Activated T-helper 2 cell treated with anti-CD3 and anti-CD28 coated beads, Interferon-gamma antibody, Interleukin-2, Interleukin-4, amounts not matched to agents 10 μg/mL and 5 μg/mL and 100 μg/mL, durations not matched to agents 14 hours and 24 hours and 36 hours (primary cell): ENCODE measurements at regions of chr15 and their contacts with region 1.

Region 1: DNA sequence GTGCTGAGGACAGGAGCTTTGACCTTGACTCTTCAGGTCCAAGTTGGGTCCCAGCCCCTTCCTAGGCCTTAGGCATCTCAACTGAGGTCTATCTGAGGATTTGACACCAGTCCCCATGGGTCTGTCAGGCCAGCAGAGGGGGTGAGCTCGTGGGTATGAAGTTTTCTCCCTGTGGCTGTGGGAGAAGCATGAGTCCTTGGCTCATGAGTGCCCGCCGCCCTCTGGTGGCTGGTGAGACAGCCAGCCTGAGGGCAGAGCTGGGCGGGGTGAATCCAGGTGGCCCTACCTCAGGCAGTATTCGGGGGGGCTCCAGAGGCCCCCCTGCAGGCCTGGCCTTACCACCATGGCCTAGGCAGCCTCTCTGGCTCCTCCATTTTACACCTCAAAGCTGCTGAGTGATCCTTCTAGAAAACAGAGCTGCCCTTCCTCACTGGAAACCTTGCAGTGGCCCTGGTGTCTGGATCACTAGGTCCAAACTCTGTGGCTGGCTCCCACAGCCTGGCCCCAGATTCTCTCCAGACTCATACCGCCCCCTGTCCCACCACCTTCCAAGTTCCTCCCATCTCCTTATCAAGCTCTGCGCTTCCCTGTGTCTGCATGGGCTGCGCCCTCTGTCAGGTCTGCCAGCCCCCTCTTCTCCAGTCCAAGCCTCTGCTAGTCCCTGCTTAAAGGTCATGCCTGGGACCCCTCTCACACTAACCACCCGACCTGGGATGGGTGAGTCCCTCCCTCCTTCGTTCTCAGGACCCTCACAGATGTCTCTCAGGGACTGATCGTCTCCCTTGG is 16.1 kb downstream of the SH2D7 start:
- DNase-seq: peak; percentile 75
- H3K4me3 Mint-ChIP-seq: no peak overlapping the region
- H3K27ac Mint-ChIP-seq: no peak overlapping the region
- H3K4me1 Mint-ChIP-seq: peaks cover 48% of the 10 kb centered on the region
- H3K27me3 Mint-ChIP-seq: no peaks in the 10 kb centered on the region

Region 2: DNA sequence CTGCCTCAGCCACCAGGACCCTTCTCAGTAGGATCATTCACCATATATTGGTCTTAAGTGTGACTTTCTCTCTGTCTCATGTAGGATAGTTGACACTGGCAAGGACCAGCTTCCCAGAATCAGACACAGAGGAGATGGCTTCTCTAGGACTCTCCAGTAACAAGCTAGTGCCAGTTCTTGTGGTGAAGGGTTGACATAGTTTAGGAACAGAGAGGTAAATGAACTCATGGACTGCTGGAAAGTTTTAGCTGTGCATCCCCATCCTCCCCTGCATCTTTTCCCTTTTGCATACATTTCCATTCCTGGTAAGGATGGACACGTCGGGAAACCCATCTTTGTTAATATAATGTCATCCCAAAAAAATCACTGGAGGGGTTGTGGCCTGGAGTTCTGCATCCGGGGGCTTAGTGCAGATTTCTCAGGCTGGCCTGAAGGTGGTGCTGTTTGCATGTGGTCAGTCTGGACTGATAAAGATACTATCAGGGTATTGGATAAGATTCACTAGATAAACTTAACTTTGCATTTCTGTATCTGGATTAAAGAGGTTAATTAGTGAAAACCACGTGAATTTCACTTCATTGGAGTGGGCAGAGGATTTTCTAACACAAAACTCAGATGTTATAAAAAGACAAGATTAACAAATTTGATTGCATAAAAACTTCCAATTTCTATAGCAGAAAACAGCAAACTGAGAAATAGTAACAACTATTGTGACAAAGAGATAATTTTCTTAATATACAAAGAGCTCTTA is 141.8 kb before region 1 on chr15:
- intact Hi-C with region 1: loop called (anchors 1 kb)
- DNase-seq: no peak
- H3K4me3 Mint-ChIP-seq: no peak overlapping the region
- H3K27ac Mint-ChIP-seq: no peak overlapping the region
- H3K4me1 Mint-ChIP-seq: peaks cover 2% of the 10 kb centered on the region
- H3K27me3 Mint-ChIP-seq: peaks cover 36% of the 10 kb centered on the region

Region 3: DNA sequence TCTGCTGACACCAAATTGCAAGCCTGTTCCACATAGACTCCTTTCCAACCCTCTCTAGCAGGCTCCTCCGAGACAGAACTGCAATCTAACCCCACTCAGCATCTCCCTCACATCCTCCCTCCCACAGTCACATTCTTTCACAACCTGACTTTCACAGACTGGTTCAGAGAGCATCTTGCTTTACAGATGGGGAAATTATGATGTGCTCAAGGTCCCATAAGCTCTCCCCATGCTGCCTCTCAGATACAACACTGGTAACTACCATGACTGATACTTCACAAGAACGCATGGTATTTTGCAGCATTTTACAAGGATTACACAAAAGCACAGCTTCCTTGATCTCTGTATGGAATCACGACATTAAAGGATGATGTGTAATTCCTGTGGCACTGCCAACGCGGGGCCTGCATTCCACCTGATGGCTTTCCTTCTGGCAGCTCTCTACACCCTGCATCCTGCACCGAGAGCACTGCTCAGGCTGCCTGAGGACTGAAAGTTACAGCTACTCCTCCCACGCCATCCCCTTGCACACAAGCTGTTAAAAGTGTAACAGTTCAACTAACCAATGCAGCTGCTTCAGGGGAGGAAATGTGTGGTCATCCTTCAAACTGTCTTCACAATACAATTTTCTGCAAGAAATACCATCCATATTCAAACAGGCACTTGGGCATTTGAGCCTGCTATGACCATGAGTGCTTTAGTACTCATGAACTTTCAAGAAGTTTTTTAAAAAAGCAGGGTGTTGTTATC is 58.6 kb before region 1 on chr15:
- intact Hi-C with region 1: loop called (anchors 2 kb)
- DNase-seq: peak; percentile 57
- H3K4me3 Mint-ChIP-seq: peak overlapping the region; percentile 72
- H3K27ac Mint-ChIP-seq: peak overlapping the region; percentile 98
- H3K4me1 Mint-ChIP-seq: peaks cover 93% of the 10 kb centered on the region
- H3K27me3 Mint-ChIP-seq: no peaks in the 10 kb centered on the region

Region 4: GRCh38 chr15:78082106-78083078 is 26.1 kb before region 1 on chr15:
- intact Hi-C with region 1: loop called (anchors 2 kb)
- DNase-seq: no peak
- H3K4me3 Mint-ChIP-seq: no peak overlapping the region
- H3K27ac Mint-ChIP-seq: peak overlapping the region; percentile 74
- H3K4me1 Mint-ChIP-seq: peaks cover 34% of the 10 kb centered on the region
- H3K27me3 Mint-ChIP-seq: no peaks in the 10 kb centered on the region

Region 5: GRCh38 chr15:78195735-78196201 is 87.3 kb after region 1 on chr15:
- intact Hi-C with region 1: loop called (anchors 1 kb)
- DNase-seq: peak; percentile 23
- H3K4me3 Mint-ChIP-seq: no peak overlapping the region
- H3K27ac Mint-ChIP-seq: no peak overlapping the region
- H3K4me1 Mint-ChIP-seq: no peaks in the 10 kb centered on the region
- H3K27me3 Mint-ChIP-seq: peaks cover 8% of the 10 kb centered on the region

Region 6: DNA sequence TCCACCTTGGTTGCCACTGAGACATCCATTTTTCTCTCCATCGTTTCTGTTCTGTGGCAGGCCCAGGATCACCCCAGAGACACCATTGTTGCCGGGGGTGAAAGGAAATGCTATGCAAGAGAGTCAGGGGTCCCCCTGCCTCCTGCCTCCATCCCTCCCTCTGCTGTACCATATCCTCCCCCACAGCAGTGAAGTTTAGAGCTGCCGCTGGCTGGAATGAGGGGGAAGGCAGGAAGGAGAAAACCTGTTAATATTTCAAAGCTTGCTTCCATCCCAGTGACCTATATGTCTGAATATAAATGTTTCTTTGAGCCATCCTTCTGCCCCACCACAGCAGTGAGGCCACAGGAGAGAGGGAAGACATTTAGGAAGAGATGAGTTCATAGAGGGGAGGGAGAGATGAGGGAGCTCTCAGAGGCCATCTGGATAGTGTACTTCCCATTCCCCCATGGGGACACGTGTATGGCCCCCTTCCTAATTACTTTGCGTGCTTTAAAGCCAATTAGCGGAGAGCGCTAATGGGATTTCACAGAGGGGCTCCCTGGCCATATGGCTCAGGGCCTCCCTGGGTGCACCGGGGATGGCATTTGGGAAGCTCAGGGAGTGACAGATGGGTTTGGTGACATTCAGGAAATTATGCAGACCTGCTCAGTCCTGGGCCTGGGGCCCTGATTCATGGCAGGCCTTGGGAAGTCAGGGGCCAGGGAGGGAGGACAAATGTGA is 573.0 kb after region 1 on chr15:
- intact Hi-C with region 1: no loop called
- DNase-seq: no peak
- H3K4me3 Mint-ChIP-seq: no peak overlapping the region
- H3K27ac Mint-ChIP-seq: no peak overlapping the region
- H3K4me1 Mint-ChIP-seq: no peaks in the 10 kb centered on the region
- H3K27me3 Mint-ChIP-seq: peaks cover 2% of the 10 kb centered on the region